ENCODE measurements at regions of chr1 and their contacts with region 1.

Region 1: DNA sequence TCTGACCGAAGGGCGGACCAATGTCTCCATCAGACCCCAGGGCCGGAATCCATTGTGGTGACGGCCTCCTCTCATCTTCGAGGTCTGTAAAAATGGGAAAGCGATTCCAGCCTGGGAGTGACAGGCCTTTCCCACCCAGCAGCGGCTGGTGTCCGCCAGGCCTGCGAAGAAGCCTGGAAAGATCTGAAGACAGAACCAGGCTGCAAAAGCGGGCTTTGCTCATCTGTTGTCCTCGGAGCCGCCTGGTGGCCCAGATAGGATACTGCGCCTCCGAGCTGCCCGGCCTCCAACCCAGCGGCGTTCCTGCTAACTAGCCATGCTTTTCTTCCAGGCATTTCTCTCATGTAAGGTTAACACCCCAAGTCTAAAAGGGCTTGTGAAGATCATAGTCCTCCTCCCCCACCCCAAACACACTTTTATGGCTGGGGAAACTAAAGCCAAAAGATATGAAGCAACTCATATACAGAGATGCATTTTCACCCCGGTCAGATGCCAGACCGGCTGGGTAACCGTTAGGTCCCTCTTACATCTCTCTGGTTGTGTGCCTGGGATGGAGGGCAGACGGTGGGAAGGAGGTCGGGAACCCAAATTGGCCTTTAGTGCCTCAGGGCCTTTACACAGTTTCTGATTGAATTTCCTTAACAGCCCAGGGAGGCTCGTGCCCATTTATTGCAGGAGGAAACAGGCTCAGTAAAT is 1.9 kb upstream of the DHRS3 start:
- DNase-seq: peak; percentile 82 to 86
- ATAC-seq: peak; percentile 27 to 28
- H3K4me3 ChIP-seq: peak overlapping the region; percentile 72 to 90 (median 86)
- H3K27ac ChIP-seq: peak overlapping the region; percentile 87 to 97 (median 94)
- H3K4me1 ChIP-seq: peaks cover 33 to 42% of the 10 kb centered on the region in 2 donors
- H3K27me3 ChIP-seq: no peaks in the 10 kb centered on the region
- CTCF ChIP-seq: peak; percentile 95 to 98 (median 97)
- POLR2A ChIP-seq: no peak

Region 2: GRCh38 chr1:12275369-12275768 is 344.6 kb before region 1 on chr1:
- in situ Hi-C with region 1: no loop called
- intact Hi-C with region 1: loop called (anchors 5 kb)
- DNase-seq: no peak
- ATAC-seq: no peak
- H3K4me3 ChIP-seq: no peak overlapping the region
- H3K27ac ChIP-seq: no peak overlapping the region
- H3K4me1 ChIP-seq: peaks cover 5 to 7% of the 10 kb centered on the region in 2 donors
- H3K27me3 ChIP-seq: no peaks in the 10 kb centered on the region
- CTCF ChIP-seq: peak; percentile 9 to 66 (median 28)
- POLR2A ChIP-seq: no peak

Region 3: GRCh38 chr1:12339396-12339795 is 280.5 kb before region 1 on chr1:
- in situ Hi-C with region 1: no loop called
- intact Hi-C with region 1: loop called (anchors 2 kb)
- DNase-seq: no peak
- ATAC-seq: no peak
- H3K4me3 ChIP-seq: no peak overlapping the region
- H3K27ac ChIP-seq: peak overlapping the region; percentile 82 to 88 (median 87)
- H3K4me1 ChIP-seq: peaks cover 54 to 84% of the 10 kb centered on the region in 2 donors
- H3K27me3 ChIP-seq: no peaks in the 10 kb centered on the region
- CTCF ChIP-seq: peak in 3 of 5 experiments; percentile 6 to 30 (median 28)
- POLR2A ChIP-seq: no peak

Region 4: DNA sequence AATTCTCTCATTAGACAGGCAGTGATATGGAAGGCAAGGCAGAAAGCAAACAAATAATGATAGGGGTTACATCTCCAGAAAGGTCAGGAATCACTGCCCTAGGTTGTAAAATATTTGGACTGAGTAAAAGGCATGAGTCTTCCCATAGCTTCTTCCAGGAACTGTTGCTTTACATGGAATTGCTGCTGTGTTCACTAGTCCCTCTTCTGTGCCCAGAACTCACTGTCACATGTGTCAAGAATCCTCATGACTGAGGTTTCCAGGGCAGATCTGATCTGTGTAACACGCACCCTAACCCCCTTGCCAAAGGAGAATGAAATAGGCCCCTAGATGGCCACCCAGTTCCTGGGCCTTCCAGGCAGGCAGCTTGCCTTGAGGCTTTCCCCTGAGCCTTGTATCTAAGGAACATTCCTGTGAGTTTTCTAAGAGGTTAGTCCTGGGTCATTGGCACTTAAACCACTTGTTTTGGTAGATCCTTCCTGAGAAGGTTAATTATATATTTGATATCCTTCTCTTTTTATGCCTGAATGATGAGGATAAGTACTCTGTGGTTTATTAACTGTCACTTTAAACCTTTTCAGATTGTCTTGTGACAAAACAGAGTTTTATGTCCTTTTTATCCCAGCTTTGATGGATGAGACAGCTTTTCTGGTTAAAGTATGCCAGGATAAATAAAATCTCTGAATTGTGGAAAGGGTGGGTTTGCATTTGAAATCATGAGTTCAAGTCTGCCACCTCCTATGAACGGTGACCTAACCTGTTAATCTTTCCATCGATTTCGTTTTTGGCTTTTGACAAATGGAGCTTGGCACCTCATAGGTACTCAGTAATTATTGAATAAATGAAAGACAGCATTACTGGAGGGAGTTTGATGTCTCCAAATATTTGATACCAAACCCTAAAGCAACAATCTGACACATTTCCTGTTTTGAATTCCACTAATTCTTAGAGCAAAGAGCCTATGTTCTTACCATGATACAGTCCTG is 165.2 kb before region 1 on chr1:
- in situ Hi-C with region 1: no loop called
- intact Hi-C with region 1: loop called (anchors 2 kb)
- DNase-seq: peak; percentile 85 to 88
- ATAC-seq: peak; percentile 55 to 67
- H3K4me3 ChIP-seq: no peak overlapping the region
- H3K27ac ChIP-seq: peak overlapping the region; percentile 84 to 91 (median 90)
- H3K4me1 ChIP-seq: peaks cover 71 to 84% of the 10 kb centered on the region in 2 donors
- H3K27me3 ChIP-seq: no peaks in the 10 kb centered on the region
- CTCF ChIP-seq: no peak
- POLR2A ChIP-seq: peak in 1 of 2 donors; percentile 37

Region 5: GRCh38 chr1:12596007-12596821 is 23.7 kb before region 1 on chr1:
- in situ Hi-C with region 1: no loop called
- intact Hi-C with region 1: loop called (anchors 1 kb)
- DNase-seq: peak; percentile 91 to 96
- ATAC-seq: peak; percentile 31 to 55
- H3K4me3 ChIP-seq: peak overlapping the region; percentile 43 to 53 (median 52)
- H3K27ac ChIP-seq: peak overlapping the region; percentile 83 to 93 (median 88)
- H3K4me1 ChIP-seq: peaks cover 87 to 90% of the 10 kb centered on the region in 2 donors
- H3K27me3 ChIP-seq: no peaks in the 10 kb centered on the region
- CTCF ChIP-seq: peak in 1 of 5 experiments; percentile 10
- POLR2A ChIP-seq: peak; percentile 57 to 74

Region 6: DNA sequence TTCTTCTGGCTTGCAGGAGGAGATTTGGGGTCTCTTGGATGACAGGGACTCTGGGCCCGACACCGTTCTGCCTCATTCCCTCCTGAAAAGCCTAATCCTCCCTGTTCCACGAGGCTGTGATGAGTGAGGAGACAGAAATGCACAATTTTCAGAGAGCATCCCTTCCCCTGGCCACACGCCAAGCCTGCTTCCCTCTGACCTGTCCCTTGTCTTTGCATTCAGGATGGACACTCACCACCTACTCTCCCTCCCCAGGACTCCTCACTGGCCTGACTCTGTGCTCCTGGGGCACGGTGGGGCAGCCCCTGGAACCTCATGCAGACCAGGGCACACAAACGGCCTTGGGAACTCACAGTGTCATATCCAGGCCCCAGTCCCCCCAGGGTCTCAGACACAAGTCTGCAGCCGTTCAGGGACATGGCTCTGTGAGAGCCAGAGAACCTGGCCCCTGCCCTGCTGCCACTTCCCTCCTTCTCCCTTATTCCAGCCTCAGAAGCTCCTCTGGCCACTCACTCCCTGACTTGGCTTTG is 150.1 kb after region 1 on chr1:
- in situ Hi-C with region 1: no loop called
- intact Hi-C with region 1: no loop called
- DNase-seq: no peak
- ATAC-seq: no peak
- H3K4me3 ChIP-seq: no peak overlapping the region
- H3K27ac ChIP-seq: no peak overlapping the region
- H3K4me1 ChIP-seq: no peaks in the 10 kb centered on the region
- H3K27me3 ChIP-seq: peaks cover 0 to 2% (median 0%) of the 10 kb centered on the region in 3 donors
- CTCF ChIP-seq: no peak
- POLR2A ChIP-seq: no peak